PC-3 (cell line): ENCODE measurements at regions of chr22 and their contacts with region 1.

Region 1: DNA sequence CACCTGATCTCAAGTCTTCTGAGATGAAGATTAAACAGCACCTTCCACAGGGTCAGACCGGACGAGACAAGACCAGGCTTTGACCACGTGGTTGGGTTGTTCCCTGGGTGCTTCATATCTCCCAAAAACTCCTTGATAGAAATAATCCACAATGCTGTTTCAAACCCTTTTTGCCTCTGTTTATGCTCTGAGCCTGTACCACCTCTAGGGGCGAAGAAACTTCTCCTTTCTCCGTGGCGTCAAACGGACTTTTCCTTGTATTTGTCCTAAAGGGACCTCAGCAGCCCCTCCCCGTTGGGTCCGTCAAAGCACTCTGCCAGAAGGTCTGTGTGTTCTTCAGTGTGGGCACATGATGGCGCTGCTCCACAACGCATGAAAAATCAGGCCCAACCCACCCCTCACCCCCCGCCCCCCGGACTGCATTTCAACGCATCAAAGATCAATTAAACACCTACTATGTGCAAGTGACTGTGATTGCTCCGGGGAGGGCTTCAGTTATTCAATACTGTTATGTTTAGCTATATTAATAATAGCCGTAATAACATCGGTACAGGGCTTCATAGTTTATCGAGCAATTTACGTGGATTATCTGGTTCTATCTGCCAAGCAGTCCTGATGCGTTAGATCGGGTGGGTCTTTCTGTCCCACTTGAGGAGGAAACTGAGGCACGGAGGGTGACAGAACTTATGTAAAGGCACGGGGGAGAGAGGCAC is 17.3 kb upstream of the EIF3D start:
- DNase-seq: peak; percentile 67
- ATAC-seq: peak; percentile 34
- H3K4me3 ChIP-seq: peak overlapping the region; percentile 48
- H3K27ac ChIP-seq: peak overlapping the region; percentile 71
- H3K4me1 ChIP-seq: peaks cover 35% of the 10 kb centered on the region
- H3K27me3 ChIP-seq: no peaks in the 10 kb centered on the region
- CTCF ChIP-seq: peak; percentile 51

Region 2: GRCh38 chr22:36374603-36375024 is 171.6 kb before region 1 on chr22:
- CTCF ChIA-PET with region 1: no interaction called
- POLR2A ChIA-PET with region 1: no interaction called
- intact Hi-C with region 1: no loop called
- DNase-seq: peak; percentile 84
- ATAC-seq: peak; percentile 91
- H3K4me3 ChIP-seq: no peak overlapping the region
- H3K27ac ChIP-seq: peak overlapping the region; percentile 82
- H3K4me1 ChIP-seq: peaks cover 65% of the 10 kb centered on the region
- H3K27me3 ChIP-seq: no peaks in the 10 kb centered on the region
- CTCF ChIP-seq: no peak

Region 3: GRCh38 chr22:36528795-36529751 is 17.2 kb before region 1 on chr22 and contains the start of gene EIF3D:
- CTCF ChIA-PET with region 1: no interaction called
- POLR2A ChIA-PET with region 1: interaction called, 3 read pairs
- intact Hi-C with region 1: loop called (anchors 1 kb)
- DNase-seq: peak; percentile 98
- ATAC-seq: peak; percentile 91
- H3K4me3 ChIP-seq: peak within 1 kb of the TSS; percentile 88
- H3K27ac ChIP-seq: peak within 1 kb of the TSS; percentile 86
- H3K4me1 ChIP-seq: peaks cover 15% of the 10 kb centered on the region
- H3K27me3 ChIP-seq: no peaks in the 10 kb centered on the region
- CTCF ChIP-seq: no peak
- total RNA-seq, gene EIF3D: 210 and 247 TPM in 2 replicates

Region 4: GRCh38 chr22:36577019-36577418 is 30.8 kb after region 1 on chr22:
- CTCF ChIA-PET with region 1: no interaction called
- POLR2A ChIA-PET with region 1: no interaction called
- intact Hi-C with region 1: no loop called
- DNase-seq: peak; percentile 90
- ATAC-seq: peak; percentile 90
- H3K4me3 ChIP-seq: no peak overlapping the region
- H3K27ac ChIP-seq: peak overlapping the region; percentile 29
- H3K4me1 ChIP-seq: peaks cover 14% of the 10 kb centered on the region
- H3K27me3 ChIP-seq: no peaks in the 10 kb centered on the region
- CTCF ChIP-seq: no peak

Region 5: GRCh38 chr22:36659762-36660509 is 113.7 kb after region 1 on chr22:
- CTCF ChIA-PET with region 1: no interaction called
- POLR2A ChIA-PET with region 1: no interaction called
- intact Hi-C with region 1: loop called (anchors 10 kb)
- DNase-seq: peak; percentile 98
- ATAC-seq: peak; percentile 79
- H3K4me3 ChIP-seq: peak overlapping the region; percentile 61
- H3K27ac ChIP-seq: peak overlapping the region; percentile 97
- H3K4me1 ChIP-seq: peaks cover 30% of the 10 kb centered on the region
- H3K27me3 ChIP-seq: no peaks in the 10 kb centered on the region
- CTCF ChIP-seq: no peak

Region 6: DNA sequence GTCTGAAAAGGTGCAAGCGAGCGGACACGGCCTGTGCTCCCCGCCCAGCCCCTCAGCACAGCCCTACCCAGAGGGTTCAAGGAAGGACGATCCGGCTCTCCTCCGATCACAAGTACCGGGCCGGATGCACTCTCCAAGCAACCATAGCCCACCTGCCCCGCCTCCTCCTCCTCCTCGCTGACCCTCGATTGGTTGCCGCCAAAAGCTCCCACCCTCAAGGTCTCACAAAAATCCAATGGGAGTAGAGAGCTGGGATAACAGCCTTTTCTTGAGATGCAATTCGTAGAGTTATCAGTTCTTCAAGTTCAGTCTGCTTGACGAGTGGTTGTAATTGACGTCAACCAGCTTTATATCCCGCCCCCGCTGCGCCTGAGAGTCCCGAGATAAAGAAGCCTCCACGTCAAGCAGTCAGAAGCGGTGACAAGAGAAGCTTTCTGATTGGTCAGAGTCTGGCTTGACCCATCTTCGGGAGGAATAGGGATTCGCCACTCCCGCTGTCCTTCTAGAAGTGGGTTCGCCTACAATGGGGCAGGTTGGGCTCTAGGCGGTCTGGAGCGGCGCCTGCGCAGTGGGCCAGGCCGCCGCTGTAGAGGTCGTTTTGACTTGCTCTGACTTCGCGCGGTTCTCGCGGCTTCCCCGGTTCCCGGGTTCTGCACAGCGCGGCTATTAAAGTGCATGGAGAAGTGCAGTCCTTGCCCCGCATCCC is 229.9 kb after region 1 on chr22 and contains the start of gene IFT27:
- CTCF ChIA-PET with region 1: interaction called, 12 read pairs
- POLR2A ChIA-PET with region 1: interaction called, 6 read pairs
- intact Hi-C with region 1: loop called (anchors 1 kb)
- DNase-seq: peak; percentile 98
- ATAC-seq: peak; percentile 94
- H3K4me3 ChIP-seq: peak within 1 kb of the TSS; percentile 88
- H3K27ac ChIP-seq: no peak within 1 kb of the TSS
- H3K4me1 ChIP-seq: peaks cover 13% of the 10 kb centered on the region; the same call in 1 of the 2 replicates
- H3K27me3 ChIP-seq: no peaks in the 10 kb centered on the region
- CTCF ChIP-seq: no peak
- total RNA-seq, gene IFT27: 19.9 and 23.3 TPM in 2 replicates

Region 7: GRCh38 chr22:36856121-36856791 is 310.0 kb after region 1 on chr22:
- CTCF ChIA-PET with region 1: interaction called, 5 read pairs
- POLR2A ChIA-PET with region 1: no interaction called
- intact Hi-C with region 1: loop called (anchors 1 kb)
- DNase-seq: peak; percentile 76
- ATAC-seq: peak; percentile 95
- H3K4me3 ChIP-seq: no peak overlapping the region
- H3K27ac ChIP-seq: no peak overlapping the region
- H3K4me1 ChIP-seq: no peaks in the 10 kb centered on the region
- H3K27me3 ChIP-seq: 0 out of 2 replicates have a peak, but pooled peaks cover 6% of the 10 kb centered on the region
- CTCF ChIP-seq: peak; percentile 99

Region 8: DNA sequence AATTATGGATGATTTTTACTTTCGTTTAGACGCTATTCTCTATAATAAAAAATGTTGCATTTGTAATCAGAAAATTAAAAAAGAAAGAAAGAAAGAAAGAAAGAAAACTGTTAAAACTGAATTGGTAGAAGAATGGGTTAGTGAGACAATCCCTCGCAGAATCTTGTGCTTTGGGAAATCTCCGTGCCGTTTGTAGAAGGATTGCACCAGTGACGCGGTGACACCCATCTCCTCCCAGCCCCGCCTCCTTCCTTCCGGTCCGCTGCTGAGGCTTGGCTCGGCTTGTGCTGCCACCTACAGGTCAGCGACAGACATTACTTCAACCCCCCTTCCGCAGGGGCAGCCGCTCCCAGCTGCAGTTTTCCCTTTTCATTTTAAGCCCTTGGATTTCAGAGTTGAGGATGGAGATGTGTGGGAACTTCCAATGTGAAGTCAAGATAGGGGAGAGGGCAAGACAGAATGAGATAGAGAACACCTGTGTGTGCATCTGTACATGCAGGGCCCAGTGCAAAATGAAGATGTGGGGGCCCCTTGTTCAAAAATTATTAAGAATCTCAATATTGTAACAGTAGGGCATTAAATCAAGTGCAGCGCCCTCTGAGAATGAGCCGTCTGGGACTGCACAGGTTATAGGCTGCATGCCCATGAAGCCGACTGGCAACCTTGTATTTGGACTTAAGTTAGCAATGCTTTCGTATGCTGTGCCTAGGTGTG is 431.9 kb after region 1 on chr22:
- CTCF ChIA-PET with region 1: no interaction called
- POLR2A ChIA-PET with region 1: no interaction called
- intact Hi-C with region 1: loop called (anchors 2 kb)
- DNase-seq: peak; percentile 78
- ATAC-seq: peak; percentile 91
- H3K4me3 ChIP-seq: peak overlapping the region; percentile 72
- H3K27ac ChIP-seq: no peak overlapping the region
- H3K4me1 ChIP-seq: no peaks in the 10 kb centered on the region
- H3K27me3 ChIP-seq: no peaks in the 10 kb centered on the region
- CTCF ChIP-seq: peak; percentile 82